PC-9 (cell line): ENCODE measurements at regions of chr16 and their contacts with region 1.

Region 1: GRCh38 chr16:89442990-89443731 is 47.2 kb downstream of the ANKRD11 start:
- DNase-seq: peak; percentile 96 to 97
- H3K4me3 ChIP-seq: peak overlapping the region; percentile 41; the same call in 1 of the 2 replicates
- H3K27ac ChIP-seq: peak overlapping the region; percentile 88
- H3K4me1 ChIP-seq: peaks cover 70% of the 10 kb centered on the region
- H3K27me3 ChIP-seq: no peaks in the 10 kb centered on the region
- CTCF ChIP-seq: no peak

Region 2: GRCh38 chr16:89026121-89026612 is 417.0 kb before region 1 on chr16:
- CTCF ChIA-PET with region 1: no interaction called
- POLR2A ChIA-PET with region 1: no interaction called
- intact Hi-C with region 1: no loop called
- DNase-seq: no peak
- H3K4me3 ChIP-seq: no peak overlapping the region
- H3K27ac ChIP-seq: no peak overlapping the region
- H3K4me1 ChIP-seq: no peaks in the 10 kb centered on the region
- H3K27me3 ChIP-seq: peaks cover 66% of the 10 kb centered on the region
- CTCF ChIP-seq: no peak

Region 3: DNA sequence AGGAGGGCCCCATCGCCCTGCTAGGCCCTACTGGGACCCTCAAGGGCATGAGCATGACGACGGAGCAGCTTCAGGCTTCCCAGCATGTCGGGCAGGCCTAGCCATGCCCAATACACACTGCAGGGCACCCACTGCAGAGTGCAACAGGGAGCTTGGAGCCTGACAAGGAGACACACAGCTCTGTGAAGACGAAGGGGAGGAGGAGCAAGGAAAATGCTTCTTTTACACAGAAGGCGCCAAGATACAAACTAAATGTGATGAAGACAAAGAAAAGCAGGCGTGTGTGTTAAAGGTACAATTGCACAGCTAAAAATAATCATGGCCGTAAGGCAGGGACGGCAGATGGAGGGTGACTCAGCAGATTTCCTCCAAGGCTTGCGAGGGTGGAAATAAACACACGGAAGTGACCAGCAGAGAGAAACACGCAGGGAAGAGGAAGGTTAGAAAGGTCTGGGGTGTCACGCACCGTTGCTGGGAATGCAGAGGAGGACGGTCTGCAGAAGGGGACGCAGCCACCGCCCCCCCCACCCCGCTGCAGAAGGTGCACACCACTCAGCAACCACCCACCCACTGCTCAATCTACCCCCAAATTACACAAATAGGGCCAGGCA is 117.2 kb before region 1 on chr16:
- CTCF ChIA-PET with region 1: interaction called, 3 read pairs
- POLR2A ChIA-PET with region 1: no interaction called
- intact Hi-C with region 1: loop called (anchors 2 kb)
- DNase-seq: peak; percentile 61 to 64
- H3K4me3 ChIP-seq: no peak overlapping the region; the same call in 1 of the 2 replicates
- H3K27ac ChIP-seq: peak overlapping the region; percentile 86
- H3K4me1 ChIP-seq: peaks cover 95% of the 10 kb centered on the region
- H3K27me3 ChIP-seq: no peaks in the 10 kb centered on the region
- CTCF ChIP-seq: no peak

Region 4: DNA sequence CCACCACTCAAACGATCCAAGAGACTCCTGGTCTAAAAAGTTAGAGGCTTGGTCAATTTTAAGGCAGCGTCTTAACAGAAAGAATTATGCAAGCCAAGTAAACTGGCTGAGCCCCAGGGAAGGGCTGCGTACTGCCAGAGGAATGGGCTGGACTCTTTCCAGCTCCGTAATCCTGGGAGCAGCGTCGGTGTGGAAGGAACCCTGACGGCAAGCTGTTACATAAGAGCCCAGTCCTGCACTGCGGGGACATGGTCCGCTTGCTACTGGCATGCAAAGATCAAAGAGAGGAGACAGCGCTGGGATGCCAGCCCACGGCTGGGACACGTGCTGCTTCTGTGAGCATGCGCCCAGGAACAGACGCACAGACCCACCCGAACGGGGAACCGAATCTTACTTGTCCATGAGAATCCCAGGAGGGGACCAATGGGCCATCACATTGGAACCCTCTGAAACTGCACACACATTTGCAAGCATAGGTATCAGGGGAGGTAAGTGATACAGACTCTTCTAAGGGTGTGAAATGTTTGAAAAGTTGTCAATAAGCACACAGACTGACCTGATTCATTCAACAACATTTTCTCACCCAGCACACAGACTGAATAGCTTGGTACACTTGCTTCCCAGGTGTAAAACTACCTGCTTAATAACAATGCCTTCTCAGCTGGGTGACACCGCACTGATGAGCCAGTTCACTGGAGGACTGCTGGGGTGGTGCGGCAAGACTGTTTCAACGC is 47.9 kb before region 1 on chr16:
- CTCF ChIA-PET with region 1: no interaction called
- POLR2A ChIA-PET with region 1: no interaction called
- intact Hi-C with region 1: loop called (anchors 5 kb)
- DNase-seq: peak; percentile 88 to 92
- H3K4me3 ChIP-seq: peak overlapping the region; percentile 10; the same call in 1 of the 2 replicates
- H3K27ac ChIP-seq: peak overlapping the region; percentile 39
- H3K4me1 ChIP-seq: peaks cover 23% of the 10 kb centered on the region
- H3K27me3 ChIP-seq: no peaks in the 10 kb centered on the region
- CTCF ChIP-seq: no peak

Region 5: GRCh38 chr16:89422905-89423630 is 20.1 kb before region 1 on chr16:
- CTCF ChIA-PET with region 1: no interaction called
- POLR2A ChIA-PET with region 1: no interaction called
- intact Hi-C with region 1: no loop called
- DNase-seq: no peak
- H3K4me3 ChIP-seq: no peak overlapping the region
- H3K27ac ChIP-seq: no peak overlapping the region
- H3K4me1 ChIP-seq: no peaks in the 10 kb centered on the region
- H3K27me3 ChIP-seq: no peaks in the 10 kb centered on the region
- CTCF ChIP-seq: no peak

Region 6: GRCh38 chr16:89476804-89477261 is 33.7 kb after region 1 on chr16:
- CTCF ChIA-PET with region 1: no interaction called
- POLR2A ChIA-PET with region 1: no interaction called
- intact Hi-C with region 1: loop called (anchors 2 kb)
- DNase-seq: no peak
- H3K4me3 ChIP-seq: 0 out of 2 replicates have a peak overlapping the region, but pooled peaks have one; percentile 8
- H3K27ac ChIP-seq: peak overlapping the region; percentile 55
- H3K4me1 ChIP-seq: peaks cover 97% of the 10 kb centered on the region
- H3K27me3 ChIP-seq: no peaks in the 10 kb centered on the region
- CTCF ChIP-seq: no peak

Region 7: GRCh38 chr16:89490387-89491237 is 47.5 kb after region 1 on chr16 and contains the start of gene ANKRD11:
- CTCF ChIA-PET with region 1: no interaction called
- POLR2A ChIA-PET with region 1: no interaction called
- intact Hi-C with region 1: loop called (anchors 1 kb)
- DNase-seq: peak; percentile 98 to 100
- H3K4me3 ChIP-seq: peak within 1 kb of the TSS; percentile 91
- H3K27ac ChIP-seq: peak within 1 kb of the TSS; percentile 53
- H3K4me1 ChIP-seq: peaks cover 30% of the 10 kb centered on the region
- H3K27me3 ChIP-seq: no peaks in the 10 kb centered on the region
- CTCF ChIP-seq: no peak
- total RNA-seq, gene ANKRD11: 206 and 220 TPM in 2 replicates

Region 8: DNA sequence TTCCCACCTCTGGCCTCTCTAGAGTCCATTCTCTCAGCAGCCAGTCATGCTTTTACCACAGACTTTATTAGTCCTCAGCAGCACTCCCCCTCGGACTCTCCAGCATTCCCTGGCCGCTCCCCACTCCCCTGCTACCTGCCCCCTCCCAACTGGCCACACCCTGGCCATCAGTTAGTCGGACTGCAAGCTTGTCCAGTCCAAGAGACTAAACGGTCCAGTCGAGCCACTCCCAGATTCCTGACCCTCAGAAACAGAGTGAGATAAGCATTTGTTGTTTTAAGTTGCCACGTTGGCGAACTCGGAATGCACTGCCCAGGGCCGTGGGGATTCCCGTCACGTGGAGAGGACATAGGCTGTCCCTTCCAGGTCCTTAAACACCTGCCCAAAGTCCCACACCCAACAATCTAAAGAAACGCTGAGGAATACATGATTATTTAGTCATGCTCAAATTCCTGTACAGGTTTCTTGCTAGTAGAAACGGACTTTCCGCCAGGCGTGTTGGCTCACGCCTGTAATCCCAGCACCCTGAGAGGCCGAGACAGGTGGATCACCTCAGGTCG is 59.2 kb after region 1 on chr16:
- CTCF ChIA-PET with region 1: interaction called, 3 read pairs
- POLR2A ChIA-PET with region 1: no interaction called
- intact Hi-C with region 1: loop called (anchors 1 kb)
- DNase-seq: peak; percentile 96 to 99
- H3K4me3 ChIP-seq: no peak overlapping the region; the same call in 1 of the 2 replicates
- H3K27ac ChIP-seq: peak overlapping the region; percentile 77
- H3K4me1 ChIP-seq: peaks cover 48% of the 10 kb centered on the region
- H3K27me3 ChIP-seq: no peaks in the 10 kb centered on the region
- CTCF ChIP-seq: no peak

Region 9: DNA sequence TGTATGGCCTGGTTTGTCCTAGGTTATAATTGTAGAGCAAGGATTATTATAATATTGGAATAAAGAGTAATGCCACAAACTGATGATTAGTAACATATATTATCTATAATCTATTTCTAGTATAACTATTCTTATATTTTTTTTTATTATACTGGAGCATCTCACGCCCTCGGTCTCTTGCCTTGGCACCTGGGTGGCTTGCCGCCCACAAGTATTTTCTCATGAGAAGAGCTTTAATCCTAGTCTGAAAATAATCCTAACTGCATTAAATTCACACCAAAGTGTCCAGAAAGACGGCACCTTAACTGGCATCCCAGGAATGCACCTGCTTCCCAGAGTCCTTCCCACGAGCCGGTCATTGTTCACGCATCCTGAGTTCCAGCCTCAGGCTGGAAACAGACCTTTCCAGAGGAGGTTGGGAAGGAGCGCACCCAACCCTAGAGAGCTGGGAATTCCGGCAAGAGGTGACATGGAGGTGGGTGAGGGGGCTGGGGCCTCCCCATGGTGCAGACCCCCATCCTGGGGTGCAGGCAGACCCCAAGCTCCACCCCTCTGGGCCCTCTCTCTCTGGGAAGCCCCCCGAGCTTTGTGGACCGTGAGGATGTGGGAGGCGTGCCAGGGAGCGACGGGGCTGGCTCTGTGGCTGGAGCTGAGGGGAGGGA is 198.4 kb after region 1 on chr16:
- CTCF ChIA-PET with region 1: interaction called, 14 read pairs
- POLR2A ChIA-PET with region 1: no interaction called
- intact Hi-C with region 1: no loop called
- DNase-seq: no peak
- H3K4me3 ChIP-seq: no peak overlapping the region
- H3K27ac ChIP-seq: no peak overlapping the region
- H3K4me1 ChIP-seq: no peaks in the 10 kb centered on the region
- H3K27me3 ChIP-seq: no peaks in the 10 kb centered on the region
- CTCF ChIP-seq: no peak